GM13976 (cell line): ENCODE measurements at regions of chr20 and their contacts with region 1.

Region 1: GRCh38 chr20:49219089-49219923 is at the start of gene DDX27:
- DNase-seq: peak; percentile 96
- CTCF ChIP-seq: no peak

Region 2: DNA sequence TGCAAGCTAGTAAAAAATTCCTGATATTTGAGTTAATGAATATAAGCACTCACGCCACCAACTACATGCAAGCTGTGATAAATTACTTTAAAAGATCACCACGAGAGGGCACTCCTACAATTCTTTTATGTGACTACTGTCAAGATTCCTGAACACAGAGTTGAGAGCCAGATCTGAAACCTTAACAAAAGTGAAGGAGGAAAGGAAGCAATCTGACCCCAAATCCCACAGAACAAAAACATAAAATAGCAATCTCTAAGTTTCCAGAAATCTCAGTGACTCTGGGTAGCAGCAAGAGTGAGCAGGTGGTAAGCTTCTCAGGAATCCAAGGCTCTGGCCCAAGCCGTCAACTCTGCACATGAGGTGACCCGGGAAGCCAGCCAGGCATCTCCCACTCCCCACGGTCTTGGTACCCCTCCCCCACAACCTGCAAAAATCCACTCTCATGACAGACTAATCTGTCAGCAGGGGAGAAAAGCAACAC is 86.3 kb before region 1 on chr20:
- in situ Hi-C with region 1: loop called (anchors 5 kb)
- DNase-seq: peak; percentile 62
- CTCF ChIP-seq: peak; percentile 15

Region 3: DNA sequence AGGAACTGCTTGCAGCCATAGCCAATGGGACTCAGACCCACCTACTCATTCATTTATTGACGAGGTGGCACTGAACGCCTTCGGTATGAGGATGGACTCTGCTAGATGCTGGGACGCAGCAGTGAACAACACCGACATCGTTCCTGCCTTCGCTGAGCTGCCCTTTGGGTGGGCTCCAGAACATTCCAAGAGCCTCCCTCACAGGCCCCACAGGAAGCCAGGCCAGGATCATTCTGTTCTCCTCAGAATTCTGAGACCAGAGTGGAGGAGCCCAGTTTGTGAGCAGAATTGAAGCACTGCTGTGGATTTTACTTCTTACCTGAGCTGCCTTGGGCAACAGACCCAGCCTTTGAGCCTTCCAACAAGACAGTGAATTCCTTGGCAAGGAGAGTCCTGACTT is 181.1 kb after region 1 on chr20:
- in situ Hi-C with region 1: no loop called
- DNase-seq: no peak
- CTCF ChIP-seq: no peak